CD14-positive monocyte (primary cell): ENCODE measurements at regions of chr16 and their contacts with region 1.

Region 1: DNA sequence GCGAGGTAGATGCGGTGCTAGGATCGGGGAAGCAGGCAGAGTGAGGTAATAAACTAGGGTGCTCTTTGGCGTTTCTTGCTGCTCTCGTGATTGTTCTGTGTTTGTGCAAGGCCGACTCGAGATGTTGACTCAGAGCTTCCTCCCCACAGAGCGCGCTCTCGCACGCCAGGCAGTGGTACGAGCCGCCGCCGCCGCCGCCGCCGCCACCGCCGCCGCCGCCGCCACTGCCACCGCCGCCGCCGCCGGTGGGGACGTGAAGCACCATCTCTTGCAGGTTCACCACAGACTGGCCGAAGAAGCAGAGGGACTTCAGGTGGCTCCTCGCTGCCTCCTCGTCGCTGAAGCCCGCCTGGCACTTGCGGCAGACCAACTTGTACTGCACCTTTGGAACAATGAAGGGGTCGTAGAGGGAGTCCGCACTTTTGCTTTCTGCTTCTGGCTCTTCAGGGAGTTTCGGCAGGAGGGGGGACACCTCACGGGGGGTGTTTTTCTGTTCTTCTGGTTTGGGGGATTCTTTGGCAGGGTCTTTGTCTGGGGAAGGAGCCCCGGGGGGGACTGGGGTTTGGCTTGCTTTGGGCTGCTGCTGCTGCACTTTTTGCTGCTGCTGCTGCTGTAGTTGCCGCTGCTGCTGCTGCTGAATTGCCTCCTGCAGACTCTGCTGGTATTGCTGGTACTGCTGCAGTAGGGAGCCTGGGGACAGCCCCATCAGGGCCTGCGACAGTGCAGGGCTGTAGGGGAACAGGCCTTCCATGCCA is 260.2 kb downstream of the ZFHX3 start:
- DNase-seq: peak; percentile 95 to 98 (median 96)
- H3K4me3 ChIP-seq: peak overlapping the region; percentile 38 to 71 (median 50)
- H3K4me3 Mint-ChIP-seq: peak overlapping the region; percentile 81 to 90
- H3K27ac ChIP-seq: peak overlapping the region; percentile 62 to 86
- H3K27ac Mint-ChIP-seq: peak overlapping the region; percentile 85 to 97 (median 93)
- H3K4me1 ChIP-seq: peaks cover 22 to 23% of the 10 kb centered on the region in 2 donors
- H3K4me1 Mint-ChIP-seq: peaks cover 27% of the 10 kb centered on the region
- H3K27me3 ChIP-seq: no peaks in the 10 kb centered on the region
- H3K27me3 Mint-ChIP-seq: peaks cover 3 to 7% (median 4%) of the 10 kb centered on the region in 3 donors
- CTCF ChIP-seq: no peak

Region 2: DNA sequence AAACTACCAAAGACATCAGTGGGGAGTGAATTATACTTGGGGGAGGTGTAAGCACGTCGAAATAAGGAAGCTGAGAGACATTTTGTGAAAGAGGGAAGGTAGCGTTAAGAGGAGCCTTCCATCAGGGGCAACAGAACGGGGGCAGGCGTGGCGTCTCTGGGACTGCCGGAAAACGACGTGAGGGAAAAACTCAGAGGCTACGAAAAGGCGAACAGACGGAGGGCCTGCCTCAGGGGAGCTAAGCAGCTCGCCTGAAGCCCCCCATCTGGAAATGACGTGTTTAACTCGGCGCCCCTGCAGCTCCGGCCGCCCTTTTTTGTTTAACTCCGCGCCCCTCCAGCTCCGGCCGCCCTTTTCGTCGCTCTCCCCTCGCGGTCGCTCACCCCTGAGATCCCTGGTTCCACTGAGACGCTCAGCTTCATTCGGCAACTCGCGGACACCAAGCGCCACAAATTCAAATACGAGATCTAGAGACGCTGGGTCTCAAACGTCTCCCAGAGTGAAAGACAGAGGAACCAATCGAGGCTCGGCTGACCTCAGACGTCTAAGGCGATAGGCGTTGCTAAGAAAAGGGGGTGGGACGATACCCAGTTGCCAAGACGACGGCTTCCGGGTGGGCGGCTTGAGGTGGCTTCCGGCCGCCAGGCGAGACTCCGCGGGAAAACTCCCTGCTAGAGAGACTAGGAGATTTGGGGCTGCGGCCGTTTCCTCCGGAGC is 123.0 kb before region 1 on chr16:
- intact Hi-C with region 1: loop called (anchors 5 to 10 kb)
- DNase-seq: peak; percentile 92 to 98 (median 96)
- H3K4me3 ChIP-seq: peak overlapping the region; percentile 94 to 98 (median 96)
- H3K4me3 Mint-ChIP-seq: peak overlapping the region; percentile 99 to 100
- H3K27ac ChIP-seq: peak overlapping the region; percentile 54 to 89
- H3K27ac Mint-ChIP-seq: peak overlapping the region; percentile 97 to 99 (median 98)
- H3K4me1 ChIP-seq: peaks cover 10 to 13% of the 10 kb centered on the region in 2 donors
- H3K4me1 Mint-ChIP-seq: peaks cover 7% of the 10 kb centered on the region
- H3K27me3 ChIP-seq: no peaks in the 10 kb centered on the region
- H3K27me3 Mint-ChIP-seq: peaks cover 0 to 2% (median 0%) of the 10 kb centered on the region in 3 donors
- CTCF ChIP-seq: no peak

Region 3: GRCh38 chr16:72932050-72932449 is 144.4 kb after region 1 on chr16:
- intact Hi-C with region 1: loop called in 1 of 2 experiments (anchors 5 kb)
- DNase-seq: peak; percentile 57 to 77 (median 74)
- H3K4me3 ChIP-seq: peak overlapping the region; percentile 3 to 25 (median 21)
- H3K4me3 Mint-ChIP-seq: peak overlapping the region; percentile 5 to 69
- H3K27ac ChIP-seq: peak overlapping the region; percentile 55 to 99
- H3K27ac Mint-ChIP-seq: peak overlapping the region; percentile 96 to 100 (median 99)
- H3K4me1 ChIP-seq: peaks cover 63 to 64% of the 10 kb centered on the region in 2 donors
- H3K4me1 Mint-ChIP-seq: peaks cover 64% of the 10 kb centered on the region
- H3K27me3 ChIP-seq: no peaks in the 10 kb centered on the region
- H3K27me3 Mint-ChIP-seq: peaks cover 0 to 4% (median 0%) of the 10 kb centered on the region in 3 donors
- CTCF ChIP-seq: no peak